OCI-LY7 (cell line): ENCODE measurements at regions of chr10 and their contacts with region 1.

Region 1: DNA sequence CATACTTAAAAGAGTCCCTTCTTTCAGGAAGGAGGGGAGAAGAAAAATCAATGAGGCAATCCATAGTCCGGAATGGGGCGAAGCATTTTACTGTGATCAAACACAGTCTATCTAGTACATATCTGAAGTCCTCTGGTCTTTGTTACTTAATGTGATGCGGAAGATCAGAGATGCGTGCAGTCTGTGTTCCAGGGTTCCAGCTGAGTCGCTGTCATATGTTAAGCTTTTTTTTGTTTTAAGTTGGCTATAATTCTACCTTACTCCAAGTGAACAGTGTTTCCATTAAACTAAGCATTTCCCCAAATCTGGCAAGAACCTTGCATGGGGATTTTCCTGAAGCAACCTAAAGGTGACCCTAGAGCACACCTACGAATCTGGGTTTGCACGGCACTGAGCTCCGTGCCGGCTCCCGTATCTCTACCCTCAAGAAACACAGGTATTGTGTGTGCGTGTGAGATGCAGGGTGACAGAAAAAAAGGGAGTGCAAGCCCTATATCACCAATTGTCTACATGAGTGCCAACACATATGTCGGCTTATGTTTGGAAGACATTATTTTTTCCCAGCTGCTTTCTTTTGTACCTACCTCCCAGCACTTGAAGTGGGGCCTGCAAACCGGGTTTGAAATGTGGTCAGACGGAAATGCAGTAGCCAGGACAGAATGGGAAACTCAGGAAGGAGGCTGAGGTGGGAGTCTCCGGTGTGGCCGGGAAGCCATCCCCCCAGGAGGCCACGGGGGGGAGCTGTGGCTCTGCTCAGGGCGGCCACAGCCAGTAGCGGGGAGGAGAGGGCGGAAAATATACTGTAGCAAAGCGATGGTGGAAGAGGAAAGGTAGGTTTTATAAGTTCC is 435.8 kb upstream of the MGMT start:
- DNase-seq: peak; percentile 24
- H3K4me3 ChIP-seq: no peak overlapping the region
- H3K27ac ChIP-seq: no peak overlapping the region
- H3K4me1 ChIP-seq: no peaks in the 10 kb centered on the region
- CTCF ChIP-seq: peak; percentile 88

Region 2: GRCh38 chr10:129332476-129332875 is 301.3 kb after region 1 on chr10:
- CTCF ChIA-PET with region 1: no interaction called
- POLR2A ChIA-PET with region 1: no interaction called
- intact Hi-C with region 1: loop called (anchors 2 kb)
- DNase-seq: peak; percentile 35
- H3K4me3 ChIP-seq: no peak overlapping the region
- H3K27ac ChIP-seq: no peak overlapping the region
- H3K4me1 ChIP-seq: no peaks in the 10 kb centered on the region
- CTCF ChIP-seq: peak; percentile 85